PC-3 (cell line): ENCODE measurements at regions of chr11 and their contacts with region 1.

Region 1: GRCh38 chr11:64608046-64608445 is 17.0 kb downstream of the SLC22A12 start:
- DNase-seq: peak; percentile 33
- ATAC-seq: peak; percentile 79
- H3K4me3 ChIP-seq: peak overlapping the region; percentile 19; the same call in 1 of the 2 replicates
- H3K27ac ChIP-seq: no peak overlapping the region
- H3K4me1 ChIP-seq: no peaks in the 10 kb centered on the region
- H3K27me3 ChIP-seq: peaks cover 47% of the 10 kb centered on the region
- CTCF ChIP-seq: no peak

Region 2: DNA sequence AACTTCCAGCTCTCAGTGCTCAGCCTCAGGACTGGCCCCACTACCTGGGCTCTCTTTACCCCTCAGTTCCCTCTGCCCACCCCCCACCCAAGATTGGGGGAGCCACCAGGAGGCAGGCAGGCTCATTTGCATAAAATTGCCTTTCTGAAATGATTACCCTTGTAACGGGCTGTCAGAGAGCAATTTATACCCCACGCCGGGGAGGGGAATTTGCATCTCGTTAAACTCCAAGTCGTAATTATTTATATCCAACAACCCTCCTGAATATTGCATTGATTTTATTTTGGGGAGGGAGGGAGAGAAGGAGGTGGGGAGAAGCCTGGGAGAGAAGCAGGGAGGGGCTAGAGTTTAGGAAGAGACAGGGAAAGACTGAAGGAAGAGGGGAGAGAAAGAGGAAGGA is 106.6 kb after region 1 on chr11:
- CTCF ChIA-PET with region 1: interaction called, 12 read pairs
- POLR2A ChIA-PET with region 1: no interaction called
- intact Hi-C with region 1: no loop called
- DNase-seq: no peak
- ATAC-seq: no peak
- H3K4me3 ChIP-seq: no peak overlapping the region
- H3K27ac ChIP-seq: no peak overlapping the region
- H3K4me1 ChIP-seq: peaks cover 10% of the 10 kb centered on the region; the same call in 1 of the 2 replicates
- H3K27me3 ChIP-seq: peaks cover 57% of the 10 kb centered on the region
- CTCF ChIP-seq: no peak